HCT116 (cell line): ENCODE measurements at regions of chrX and their contacts with region 1.

Region 1: GRCh38 chrX:22300130-22300529 is 27.4 kb downstream of the CBLL2 start:
- DNase-seq: peak; percentile 45
- ATAC-seq: peak; percentile 77
- H3K4me3 ChIP-seq: peak overlapping the region in 1 of 2 experiments; percentile 26; a peak in 2 of 4 replicates
- H3K27ac ChIP-seq: no peak overlapping the region
- H3K4me1 ChIP-seq: peaks cover 14 to 17% of the 10 kb centered on the region in 2 experiments; a peak in 3 of 4 replicates
- H3K27me3 ChIP-seq: no peaks in the 10 kb centered on the region
- CTCF ChIP-seq: no peak
- POLR2A ChIP-seq: no peak
- RAD21 ChIP-seq: 0 out of 2 replicates have a peak, but pooled peaks have one; percentile 9

Region 2: DNA sequence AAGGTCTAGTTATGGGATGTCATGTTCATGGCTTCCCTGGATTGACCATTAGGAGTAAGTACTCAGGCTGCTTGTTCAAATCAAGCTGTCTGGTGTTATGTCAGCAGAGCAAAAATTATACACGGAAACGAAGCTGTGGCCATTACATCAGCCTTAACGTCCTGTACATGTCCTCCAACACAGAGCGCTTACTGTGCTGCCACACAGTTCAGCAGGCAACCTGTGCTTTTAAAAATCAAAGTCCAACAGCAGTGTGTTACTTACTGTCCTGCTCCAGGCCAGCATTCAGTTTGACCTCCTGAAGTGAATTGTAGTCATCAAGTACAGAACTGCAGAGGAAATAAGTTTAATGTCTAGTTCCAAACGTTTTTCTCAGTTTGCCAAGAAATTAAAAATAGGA is 688.0 kb before region 1 on chrX:
- CTCF ChIA-PET with region 1: no interaction called
- POLR2A ChIA-PET with region 1: no interaction called
- RAD21 ChIA-PET with region 1: no interaction called
- intact Hi-C with region 1: no loop called
- DNase-seq: no peak
- ATAC-seq: no peak
- H3K4me3 ChIP-seq: no peak overlapping the region
- H3K27ac ChIP-seq: no peak overlapping the region
- H3K4me1 ChIP-seq: no peaks in the 10 kb centered on the region
- H3K27me3 ChIP-seq: no peaks in the 10 kb centered on the region
- CTCF ChIP-seq: no peak
- POLR2A ChIP-seq: no peak
- RAD21 ChIP-seq: no peak

Region 3: DNA sequence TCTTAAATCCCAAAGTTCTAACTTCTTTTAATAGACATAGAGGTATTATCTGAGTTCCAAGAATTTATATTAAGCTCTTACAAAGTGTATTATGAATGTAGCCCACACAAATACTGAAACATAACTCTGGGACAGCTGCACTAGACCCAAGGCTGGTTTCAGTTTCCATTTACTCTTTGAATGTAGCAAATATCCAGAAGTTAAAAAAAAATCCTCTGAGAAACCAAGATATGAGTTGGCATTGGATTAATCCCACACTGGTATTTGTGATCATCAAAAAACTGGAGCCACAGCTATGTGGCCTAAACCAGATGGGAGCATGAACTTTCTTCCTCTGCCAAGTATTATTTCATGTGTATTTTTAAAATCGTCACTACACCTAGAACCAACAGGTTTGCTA is 518.6 kb before region 1 on chrX:
- CTCF ChIA-PET with region 1: no interaction called
- POLR2A ChIA-PET with region 1: no interaction called
- RAD21 ChIA-PET with region 1: no interaction called
- intact Hi-C with region 1: no loop called
- DNase-seq: no peak
- ATAC-seq: no peak
- H3K4me3 ChIP-seq: no peak overlapping the region
- H3K27ac ChIP-seq: no peak overlapping the region
- H3K4me1 ChIP-seq: no peaks in the 10 kb centered on the region
- H3K27me3 ChIP-seq: no peaks in the 10 kb centered on the region
- CTCF ChIP-seq: no peak
- POLR2A ChIP-seq: no peak
- RAD21 ChIP-seq: no peak

Region 4: GRCh38 chrX:22365460-22365859 is 65.3 kb after region 1 on chrX:
- CTCF ChIA-PET with region 1: no interaction called
- POLR2A ChIA-PET with region 1: no interaction called
- RAD21 ChIA-PET with region 1: no interaction called
- intact Hi-C with region 1: loop called (anchors 2 kb)
- DNase-seq: peak; percentile 86
- ATAC-seq: peak; percentile 73
- H3K4me3 ChIP-seq: no peak overlapping the region
- H3K27ac ChIP-seq: no peak overlapping the region
- H3K4me1 ChIP-seq: peaks cover 0 to 13% of the 10 kb centered on the region in 2 experiments; a peak in 2 of 4 replicates
- H3K27me3 ChIP-seq: no peaks in the 10 kb centered on the region
- CTCF ChIP-seq: no peak
- POLR2A ChIP-seq: no peak
- RAD21 ChIP-seq: no peak; the same call in 1 of the 2 replicates

Region 5: GRCh38 chrX:22526339-22526738 is 226.2 kb after region 1 on chrX:
- CTCF ChIA-PET with region 1: no interaction called
- POLR2A ChIA-PET with region 1: no interaction called
- RAD21 ChIA-PET with region 1: no interaction called
- intact Hi-C with region 1: no loop called
- DNase-seq: peak; percentile 51
- ATAC-seq: no peak
- H3K4me3 ChIP-seq: no peak overlapping the region
- H3K27ac ChIP-seq: no peak overlapping the region
- H3K4me1 ChIP-seq: no peaks in the 10 kb centered on the region; a peak in 1 of 4 replicates
- H3K27me3 ChIP-seq: no peaks in the 10 kb centered on the region
- CTCF ChIP-seq: no peak
- POLR2A ChIP-seq: no peak
- RAD21 ChIP-seq: no peak